Prostate gland (tissue), 2 donors: ENCODE measurements at regions of chr14 and their contacts with region 1.

Region 1: GRCh38 chr14:51283402-51284085 is 43.5 kb downstream of the TMX1 start:
- DNase-seq: peak; percentile 33
- H3K4me3 ChIP-seq: no peak overlapping the region
- H3K27ac ChIP-seq: no peak overlapping the region
- H3K4me1 ChIP-seq: no peaks in the 10 kb centered on the region
- H3K27me3 ChIP-seq: no peaks in the 10 kb centered on the region
- CTCF ChIP-seq: peak; percentile 66 to 95 (median 90)
- POLR2A ChIP-seq: no peak

Region 2: DNA sequence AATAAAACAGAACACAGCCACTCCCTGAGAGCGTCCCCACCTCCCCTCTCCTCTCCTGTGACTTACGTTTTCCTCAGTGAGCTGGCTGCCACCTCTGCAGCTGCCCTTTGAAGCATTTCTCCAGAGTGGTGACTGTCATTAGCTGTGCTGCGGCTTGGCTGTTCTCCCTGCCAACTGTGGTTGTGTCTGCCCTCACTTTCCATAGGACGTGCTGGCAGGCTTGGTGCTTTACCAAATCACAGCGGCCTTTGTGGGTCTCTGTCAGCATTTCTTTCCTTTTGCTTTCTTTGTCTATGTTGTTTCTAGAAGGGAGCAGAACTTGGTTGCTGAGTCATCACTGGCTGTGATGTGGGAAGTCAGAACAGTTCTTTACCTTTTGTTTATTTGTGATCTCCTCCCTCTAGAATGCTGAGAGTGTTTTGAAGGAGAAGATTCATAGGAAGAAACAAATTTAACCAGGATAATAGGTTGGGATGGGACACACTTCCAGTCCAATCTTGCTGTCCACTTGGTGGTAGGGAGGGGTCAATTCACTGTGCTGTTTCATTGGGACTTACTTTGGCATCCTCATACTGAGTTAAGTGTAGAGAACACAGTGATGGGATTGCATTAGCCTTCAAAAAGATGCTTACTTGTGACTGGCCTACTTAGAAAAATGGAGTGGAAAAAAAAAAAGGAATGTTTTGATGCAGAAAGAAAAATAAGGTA is 44.7 kb after region 1 on chr14:
- intact Hi-C with region 1: no loop called
- DNase-seq: no peak
- H3K4me3 ChIP-seq: no peak overlapping the region
- H3K27ac ChIP-seq: peak overlapping the region; percentile 11 to 38
- H3K4me1 ChIP-seq: no peaks in the 10 kb centered on the region
- H3K27me3 ChIP-seq: no peaks in the 10 kb centered on the region
- CTCF ChIP-seq: no peak
- POLR2A ChIP-seq: no peak

Region 3: GRCh38 chr14:51395361-51395849 is 111.9 kb after region 1 on chr14:
- intact Hi-C with region 1: loop called (anchors 10 kb)
- DNase-seq: peak; percentile 80
- H3K4me3 ChIP-seq: no peak overlapping the region
- H3K27ac ChIP-seq: peak overlapping the region; percentile 56 to 66
- H3K4me1 ChIP-seq: peaks cover 6% of the 10 kb centered on the region
- H3K27me3 ChIP-seq: no peaks in the 10 kb centered on the region
- CTCF ChIP-seq: peak in 1 of 4 experiments; percentile 4
- POLR2A ChIP-seq: no peak

Region 4: DNA sequence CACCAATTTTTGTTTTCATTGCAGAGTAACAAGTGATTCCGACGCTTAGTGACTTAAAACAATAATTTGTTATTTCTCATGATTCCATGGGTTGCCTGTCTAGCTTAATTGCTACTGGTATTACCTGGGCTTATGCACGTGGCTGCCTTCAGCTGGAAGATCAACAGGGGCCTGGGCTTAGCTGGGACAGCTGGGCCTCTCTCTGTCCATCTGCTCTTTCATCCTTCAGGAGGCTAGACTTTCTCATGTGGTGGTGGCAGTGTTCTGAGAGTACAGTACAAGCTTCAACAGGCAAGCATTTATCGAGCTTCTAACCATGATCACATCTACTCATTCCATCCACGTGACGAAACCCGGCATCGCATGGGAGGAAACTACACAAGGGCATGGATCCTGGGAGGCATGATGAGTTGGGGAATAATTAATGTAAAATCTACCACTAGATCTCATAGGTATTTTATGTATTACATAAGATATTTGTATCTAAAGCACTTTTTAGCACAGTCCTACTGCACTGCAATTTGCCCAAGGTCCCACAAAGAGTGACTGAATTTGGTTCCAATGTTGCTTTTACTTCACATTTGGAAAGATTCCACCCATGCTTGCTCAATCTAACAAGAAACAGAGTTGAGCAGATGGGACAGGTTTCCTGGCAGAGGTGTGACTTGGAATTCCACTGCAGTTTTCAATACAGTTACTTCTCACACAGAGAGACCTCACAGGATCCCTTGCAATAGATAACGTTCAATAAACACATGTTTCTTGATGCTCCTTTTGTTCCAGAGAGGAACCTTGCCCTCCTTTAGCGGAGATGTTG is 215.1 kb after region 1 on chr14:
- intact Hi-C with region 1: loop called (anchors 5 kb)
- DNase-seq: peak; percentile 26
- H3K4me3 ChIP-seq: no peak overlapping the region
- H3K27ac ChIP-seq: no peak overlapping the region
- H3K4me1 ChIP-seq: no peaks in the 10 kb centered on the region
- H3K27me3 ChIP-seq: no peaks in the 10 kb centered on the region
- CTCF ChIP-seq: no peak
- POLR2A ChIP-seq: no peak

Region 5: GRCh38 chr14:51651388-51652167 is 368.0 kb after region 1 on chr14 and contains the start of gene FRMD6:
- intact Hi-C with region 1: loop called (anchors 2 kb)
- DNase-seq: peak; percentile 83
- H3K4me3 ChIP-seq: peak within 1 kb of the TSS; percentile 76 to 83
- H3K27ac ChIP-seq: peak within 1 kb of the TSS; percentile 96 to 97
- H3K4me1 ChIP-seq: no peaks in the 10 kb centered on the region
- H3K27me3 ChIP-seq: no peaks in the 10 kb centered on the region
- CTCF ChIP-seq: peak; percentile 71 to 83 (median 77)
- POLR2A ChIP-seq: peak; percentile 76
- total RNA-seq, gene FRMD6: 59.1 to 84.0 TPM

Region 6: DNA sequence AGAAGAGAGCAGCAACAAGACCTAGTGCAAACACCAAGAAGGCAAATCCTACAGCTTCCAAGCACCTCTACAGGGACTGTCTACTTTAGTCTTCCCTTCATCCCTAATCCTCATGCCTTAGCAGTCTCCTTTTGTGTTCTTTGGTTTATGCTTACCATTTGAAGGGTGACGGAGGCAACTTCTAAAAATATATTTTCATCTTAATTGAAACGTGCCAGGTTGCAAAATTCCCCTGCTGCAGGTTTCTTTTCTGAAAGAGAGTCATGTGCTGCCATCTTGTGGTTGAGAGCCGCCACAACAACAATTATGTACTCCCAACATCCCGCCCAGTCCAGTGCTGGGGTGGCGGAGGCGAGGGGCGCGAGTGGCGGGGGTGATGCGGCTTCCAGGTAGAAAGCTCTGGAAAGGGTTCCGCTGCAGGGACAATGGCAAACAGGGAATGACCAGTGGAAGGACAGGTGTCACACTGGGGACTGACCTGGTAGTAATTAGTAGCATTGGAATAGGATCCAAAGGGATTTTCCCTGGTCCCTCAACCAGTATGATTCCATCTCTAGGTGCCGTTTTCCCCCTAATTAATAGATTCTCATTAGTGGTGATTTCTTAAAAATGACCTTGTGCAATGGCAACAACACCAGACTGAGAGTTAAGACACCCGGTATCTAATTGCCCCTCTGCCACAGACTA is 496.6 kb after region 1 on chr14:
- intact Hi-C with region 1: loop called (anchors 2 kb)
- DNase-seq: peak; percentile 72
- H3K4me3 ChIP-seq: no peak overlapping the region
- H3K27ac ChIP-seq: no peak overlapping the region
- H3K4me1 ChIP-seq: peaks cover 3% of the 10 kb centered on the region
- H3K27me3 ChIP-seq: no peaks in the 10 kb centered on the region
- CTCF ChIP-seq: peak; percentile 75 to 88 (median 80)
- POLR2A ChIP-seq: no peak

Region 7: GRCh38 chr14:51969852-51970540 is 686.5 kb after region 1 on chr14:
- intact Hi-C with region 1: loop called (anchors 5 kb)
- DNase-seq: no peak
- H3K4me3 ChIP-seq: no peak overlapping the region
- H3K27ac ChIP-seq: no peak overlapping the region
- H3K4me1 ChIP-seq: no peaks in the 10 kb centered on the region
- H3K27me3 ChIP-seq: no peaks in the 10 kb centered on the region
- CTCF ChIP-seq: no peak
- POLR2A ChIP-seq: no peak